Gastrocnemius medialis (tissue), 4 donors: ENCODE measurements at regions of chr6 and their contacts with region 1.

Region 1: DNA sequence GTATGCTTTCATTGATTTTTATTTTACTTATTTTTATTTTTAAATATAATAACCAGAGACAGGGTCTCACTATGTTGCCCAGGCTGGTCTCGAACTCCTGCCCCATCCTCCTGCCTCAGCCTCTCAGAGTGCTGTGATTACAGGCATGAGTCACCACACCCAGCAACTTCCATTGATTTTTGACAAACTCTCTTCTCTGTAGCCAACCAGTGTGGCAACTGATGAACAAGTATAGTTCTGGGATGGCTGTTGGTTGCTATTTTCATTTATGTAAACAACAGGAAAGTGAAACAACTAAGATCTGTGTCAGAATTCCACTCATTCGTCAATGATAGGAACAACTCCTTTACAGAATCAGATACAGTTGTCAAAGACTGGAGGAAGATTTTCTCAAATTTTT is 356.7 kb upstream of the JARID2 start:
- DNase-seq: no peak
- ATAC-seq: peak in 1 of 2 donors; percentile 50
- H3K4me3 ChIP-seq: no peak overlapping the region
- H3K27ac ChIP-seq: peak overlapping the region; percentile 84 to 89 (median 86)
- H3K4me1 ChIP-seq: peaks cover 21 to 33% of the 10 kb centered on the region in 2 donors
- H3K27me3 ChIP-seq: no peaks in the 10 kb centered on the region
- CTCF ChIP-seq: peak in 1 of 5 experiments; percentile 3
- POLR2A ChIP-seq: no peak

Region 2: GRCh38 chr6:15036690-15037245 is 147.6 kb after region 1 on chr6:
- in situ Hi-C with region 1: loop called in 1 of 4 experiments (anchors 5 kb)
- intact Hi-C with region 1: loop called (anchors 1 kb)
- DNase-seq: peak; percentile 93 to 98
- ATAC-seq: peak; percentile 93 to 96
- H3K4me3 ChIP-seq: peak overlapping the region; percentile 33 to 48 (median 38)
- H3K27ac ChIP-seq: peak overlapping the region; percentile 85 to 91 (median 88)
- H3K4me1 ChIP-seq: peaks cover 7 to 27% of the 10 kb centered on the region in 2 donors
- H3K27me3 ChIP-seq: no peaks in the 10 kb centered on the region
- CTCF ChIP-seq: no peak
- POLR2A ChIP-seq: peak; percentile 33 to 63

Region 3: GRCh38 chr6:15491255-15491985 is 602.2 kb after region 1 on chr6:
- in situ Hi-C with region 1: loop called in 2 of 4 experiments (anchors 25 kb)
- intact Hi-C with region 1: loop called (anchors 5 kb)
- DNase-seq: peak; percentile 59 to 77
- ATAC-seq: peak; percentile 42 to 56
- H3K4me3 ChIP-seq: no peak overlapping the region
- H3K27ac ChIP-seq: peak overlapping the region; percentile 55 to 73 (median 69)
- H3K4me1 ChIP-seq: peaks cover 38 to 45% of the 10 kb centered on the region in 2 donors
- H3K27me3 ChIP-seq: no peaks in the 10 kb centered on the region
- CTCF ChIP-seq: peak; percentile 86 to 94 (median 93)
- POLR2A ChIP-seq: no peak